PC-3 (cell line): ENCODE measurements at regions of chrX and their contacts with region 1.

Region 1: DNA sequence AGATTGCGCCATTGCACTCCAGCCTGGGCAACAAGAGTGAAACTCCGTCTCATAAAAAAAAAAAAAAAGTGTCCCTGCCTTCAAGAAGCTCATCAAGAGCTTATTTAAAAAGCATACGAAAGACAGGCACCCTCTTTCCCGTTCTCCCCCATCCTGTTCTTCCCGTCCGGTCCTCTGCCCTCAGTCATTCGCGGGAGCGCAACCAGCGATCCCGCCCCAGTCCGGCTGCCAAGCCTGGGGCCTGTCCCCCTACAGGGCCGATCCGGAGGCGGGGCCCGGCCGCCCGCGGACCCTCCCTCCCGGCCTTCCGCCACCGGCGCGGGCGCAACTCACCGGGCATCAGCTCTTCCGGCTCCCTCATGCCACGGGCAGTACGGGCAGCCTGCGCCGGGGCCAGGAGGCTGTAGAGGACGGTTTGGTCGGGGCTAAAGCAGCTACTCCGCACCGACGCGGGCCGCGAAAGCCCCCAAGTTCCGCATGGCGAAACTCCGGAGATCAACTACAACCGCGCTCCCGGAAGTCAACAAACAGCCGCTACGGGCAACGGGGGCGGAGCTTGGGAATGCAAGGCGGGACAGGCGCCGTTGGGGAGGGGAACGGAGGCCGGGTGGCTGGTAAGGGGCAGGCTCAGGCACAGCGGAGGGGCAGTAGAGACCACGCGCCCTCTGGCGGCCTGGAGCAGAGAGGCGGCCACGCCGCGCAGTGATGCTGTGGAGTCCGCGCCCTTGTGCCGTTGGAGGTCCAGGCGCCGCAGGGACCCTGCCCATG is at the start of gene RPGR:
- DNase-seq: peak; percentile 90
- ATAC-seq: peak; percentile 88
- H3K4me3 ChIP-seq: peak within 1 kb of the TSS; percentile 79
- H3K27ac ChIP-seq: peak within 1 kb of the TSS; percentile 74
- H3K4me1 ChIP-seq: peaks cover 17% of the 10 kb centered on the region
- H3K27me3 ChIP-seq: no peaks in the 10 kb centered on the region
- CTCF ChIP-seq: peak; percentile 82
- total RNA-seq, gene RPGR: 8.3 and 9.3 TPM in 2 replicates

Region 2: DNA sequence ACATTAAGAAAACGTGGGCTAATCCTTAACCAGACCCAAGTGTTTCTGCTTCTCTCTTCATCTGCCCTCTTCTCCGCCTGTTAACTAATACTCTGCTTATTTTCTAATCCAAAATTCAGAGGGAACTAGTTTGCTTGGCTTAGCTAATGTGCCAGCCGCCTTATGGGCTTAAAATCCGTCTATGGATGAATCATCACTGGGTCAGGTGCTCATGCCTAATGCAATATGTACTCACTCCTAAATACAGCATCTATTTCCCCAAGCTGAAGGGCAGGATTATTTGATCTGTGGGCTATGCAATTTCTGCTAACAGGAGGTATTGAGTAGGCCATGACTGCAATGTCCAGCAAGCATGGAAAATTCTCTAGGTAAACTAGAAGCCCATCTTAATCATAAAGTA is 492.3 kb before region 1 on chrX:
- CTCF ChIA-PET with region 1: no interaction called
- POLR2A ChIA-PET with region 1: interaction called, 15 read pairs
- intact Hi-C with region 1: no loop called
- DNase-seq: peak; percentile 36
- ATAC-seq: peak; percentile 66
- H3K4me3 ChIP-seq: no peak overlapping the region
- H3K27ac ChIP-seq: no peak overlapping the region
- H3K4me1 ChIP-seq: no peaks in the 10 kb centered on the region
- H3K27me3 ChIP-seq: no peaks in the 10 kb centered on the region
- CTCF ChIP-seq: no peak

Region 3: DNA sequence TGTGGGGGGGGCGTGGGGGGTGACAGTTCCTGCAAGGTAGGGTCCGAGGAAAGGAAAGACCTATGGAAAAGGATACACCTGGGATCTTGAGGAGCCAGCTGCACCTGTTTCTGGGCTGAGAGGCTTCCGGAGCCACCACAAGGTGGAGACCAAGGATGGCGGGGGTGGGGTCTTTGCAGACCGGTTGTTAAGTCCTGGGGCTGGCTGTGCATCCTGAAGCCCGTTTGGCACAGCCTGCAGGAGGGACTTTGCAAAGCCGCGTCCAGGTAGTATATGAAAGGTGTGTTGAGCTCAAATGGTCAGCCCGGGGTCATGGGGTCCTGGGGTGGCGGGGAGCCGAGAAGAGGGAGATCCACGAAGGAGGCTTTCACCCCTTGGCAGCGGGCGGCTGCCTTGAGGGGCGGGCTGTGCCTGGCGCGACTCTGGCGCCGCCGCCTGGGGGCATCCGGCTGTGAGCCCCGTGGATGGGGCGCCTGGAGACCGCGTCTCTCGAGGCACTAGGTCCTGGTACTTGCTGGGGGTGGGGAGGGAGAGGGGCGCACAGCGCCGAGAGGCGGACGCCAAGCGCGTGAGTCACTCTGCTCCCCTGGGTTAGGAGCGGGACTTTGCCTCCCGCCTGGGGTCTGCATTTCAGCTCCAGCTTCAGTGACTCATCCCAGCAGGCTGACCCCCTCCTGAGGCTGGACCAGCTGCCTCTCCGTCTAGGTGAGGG is 421.6 kb before region 1 on chrX:
- CTCF ChIA-PET with region 1: no interaction called
- POLR2A ChIA-PET with region 1: no interaction called
- intact Hi-C with region 1: no loop called
- DNase-seq: no peak
- ATAC-seq: no peak
- H3K4me3 ChIP-seq: no peak overlapping the region
- H3K27ac ChIP-seq: no peak overlapping the region
- H3K4me1 ChIP-seq: peaks cover 5% of the 10 kb centered on the region; the same call in 1 of the 2 replicates
- H3K27me3 ChIP-seq: no peaks in the 10 kb centered on the region
- CTCF ChIP-seq: no peak

Region 4: DNA sequence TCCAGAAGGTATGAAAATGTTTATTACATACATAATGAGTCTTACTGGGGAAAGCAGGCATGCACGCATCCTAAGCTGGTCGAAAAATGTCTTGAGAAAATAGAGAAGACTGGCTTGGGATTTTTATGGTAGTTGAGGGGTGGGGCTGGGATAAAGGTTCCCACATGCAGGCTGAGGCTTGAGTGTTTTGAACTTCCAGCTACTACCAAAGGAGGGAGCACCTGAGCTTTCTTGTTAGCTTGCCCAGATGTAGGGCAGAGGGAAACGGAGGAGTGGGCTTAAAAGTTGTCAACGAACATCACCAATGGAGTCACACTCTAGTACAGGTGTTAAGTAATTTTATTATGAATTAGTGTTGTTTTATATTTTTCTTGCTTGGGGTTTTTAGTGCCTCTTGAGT is 67.0 kb before region 1 on chrX:
- CTCF ChIA-PET with region 1: interaction called, 9 read pairs
- POLR2A ChIA-PET with region 1: interaction called, 4 read pairs
- intact Hi-C with region 1: loop called (anchors 2 kb)
- DNase-seq: peak; percentile 64
- ATAC-seq: peak; percentile 64
- H3K4me3 ChIP-seq: no peak overlapping the region
- H3K27ac ChIP-seq: no peak overlapping the region
- H3K4me1 ChIP-seq: no peaks in the 10 kb centered on the region
- H3K27me3 ChIP-seq: no peaks in the 10 kb centered on the region
- CTCF ChIP-seq: peak; percentile 72

Region 5: GRCh38 chrX:38304010-38304409 is 23.2 kb before region 1 on chrX:
- CTCF ChIA-PET with region 1: interaction called, 8 read pairs
- POLR2A ChIA-PET with region 1: no interaction called
- intact Hi-C with region 1: loop called (anchors 1 kb)
- DNase-seq: peak; percentile 33
- ATAC-seq: 0 out of 2 replicates have a peak, but pooled peaks have one; percentile 42
- H3K4me3 ChIP-seq: no peak overlapping the region
- H3K27ac ChIP-seq: no peak overlapping the region
- H3K4me1 ChIP-seq: no peaks in the 10 kb centered on the region
- H3K27me3 ChIP-seq: no peaks in the 10 kb centered on the region
- CTCF ChIP-seq: peak; percentile 60

Region 6: GRCh38 chrX:38352362-38352761 is 25.2 kb after region 1 on chrX and contains the start of gene OTC:
- CTCF ChIA-PET with region 1: no interaction called
- POLR2A ChIA-PET with region 1: interaction called, 12 read pairs
- intact Hi-C with region 1: no loop called
- DNase-seq: no peak
- ATAC-seq: no peak
- H3K4me3 ChIP-seq: no peak within 1 kb of the TSS
- H3K27ac ChIP-seq: no peak within 1 kb of the TSS
- H3K4me1 ChIP-seq: no peaks in the 10 kb centered on the region
- H3K27me3 ChIP-seq: peaks cover 18% of the 10 kb centered on the region
- CTCF ChIP-seq: no peak
- total RNA-seq, gene OTC: not detected in 2 replicates